Esophagus muscularis mucosa (tissue), 4 donors: ENCODE measurements at regions of chr10 and their contacts with region 1.

Region 1: DNA sequence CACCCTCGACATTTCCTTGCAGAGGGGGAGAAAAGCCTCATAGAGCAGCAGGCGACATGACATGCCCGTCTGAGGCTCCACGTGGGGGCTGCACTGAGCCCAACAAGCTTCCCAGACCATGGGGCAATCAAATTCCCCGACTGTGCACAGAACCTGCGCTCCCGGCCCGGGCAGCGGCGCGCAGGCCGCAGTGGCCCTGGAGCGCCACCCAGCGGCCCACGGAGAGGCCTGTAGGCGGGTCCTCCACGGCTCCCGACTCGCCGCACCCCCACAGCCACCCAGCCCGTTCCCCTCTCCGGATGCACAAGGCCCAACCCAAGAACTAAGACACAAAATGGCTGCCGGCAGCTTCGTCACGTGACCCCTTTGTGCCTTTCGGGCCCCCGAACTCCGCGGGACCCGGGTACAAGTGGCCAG is 816 bp downstream of the EPC1 start:
- DNase-seq: peak; percentile 98
- H3K4me3 ChIP-seq: peak overlapping the region; percentile 82 to 95 (median 89)
- H3K27ac ChIP-seq: peak overlapping the region; percentile 98 to 100 (median 100)
- H3K4me1 ChIP-seq: peaks cover 54 to 83% (median 79%) of the 10 kb centered on the region in 4 donors
- H3K27me3 ChIP-seq: peaks cover 0 to 6% (median 0%) of the 10 kb centered on the region in 4 donors
- CTCF ChIP-seq: peak; percentile 94 to 99 (median 95)
- EP300 ChIP-seq: no peak
- POLR2A ChIP-seq: no peak

Region 2: GRCh38 chr10:32055813-32056600 is 290.1 kb before region 1 on chr10 and contains the start of gene KIF5B:
- intact Hi-C with region 1: loop called (anchors 5 kb)
- DNase-seq: peak; percentile 92
- H3K4me3 ChIP-seq: peak within 1 kb of the TSS; percentile 72 to 99 (median 92)
- H3K27ac ChIP-seq: peak within 1 kb of the TSS; percentile 96 to 100 (median 99)
- H3K4me1 ChIP-seq: peaks cover 28 to 35% (median 29%) of the 10 kb centered on the region in 4 donors
- H3K27me3 ChIP-seq: no peaks in the 10 kb centered on the region
- CTCF ChIP-seq: no peak
- EP300 ChIP-seq: no peak
- POLR2A ChIP-seq: peak; percentile 98
- total RNA-seq, gene KIF5B: 253 to 317 (median 298) TPM

Region 3: GRCh38 chr10:32190890-32191491 is 155.2 kb before region 1 on chr10:
- intact Hi-C with region 1: loop called (anchors 10 kb)
- DNase-seq: no peak
- H3K4me3 ChIP-seq: no peak overlapping the region
- H3K27ac ChIP-seq: no peak overlapping the region
- H3K4me1 ChIP-seq: peaks cover 0 to 9% (median 6%) of the 10 kb centered on the region in 4 donors
- H3K27me3 ChIP-seq: no peaks in the 10 kb centered on the region
- CTCF ChIP-seq: peak; percentile 75 to 84 (median 75)
- EP300 ChIP-seq: no peak
- POLR2A ChIP-seq: no peak

Region 4: GRCh38 chr10:32256613-32257437 is 89.3 kb before region 1 on chr10:
- intact Hi-C with region 1: loop called (anchors 5 kb)
- DNase-seq: no peak
- H3K4me3 ChIP-seq: no peak overlapping the region
- H3K27ac ChIP-seq: no peak overlapping the region
- H3K4me1 ChIP-seq: peaks cover 0 to 9% (median 4%) of the 10 kb centered on the region in 4 donors
- H3K27me3 ChIP-seq: no peaks in the 10 kb centered on the region
- CTCF ChIP-seq: peak; percentile 87 to 93 (median 88)
- EP300 ChIP-seq: no peak
- POLR2A ChIP-seq: no peak

Region 5: GRCh38 chr10:32616438-32616837 is 270.3 kb after region 1 on chr10:
- intact Hi-C with region 1: no loop called
- DNase-seq: no peak
- H3K4me3 ChIP-seq: no peak overlapping the region
- H3K27ac ChIP-seq: no peak overlapping the region
- H3K4me1 ChIP-seq: no peaks in the 10 kb centered on the region
- H3K27me3 ChIP-seq: no peaks in the 10 kb centered on the region
- CTCF ChIP-seq: no peak
- EP300 ChIP-seq: no peak
- POLR2A ChIP-seq: no peak